ENCODE measurements at regions of chr3 and their contacts with region 1.

Region 1: GRCh38 chr3:44146073-44146472 is 95.6 kb upstream of the TOPAZ1 start:
- DNase-seq: no peak
- H3K4me3 ChIP-seq: no peak overlapping the region
- H3K27ac ChIP-seq: no peak overlapping the region
- H3K27me3 ChIP-seq: peaks cover 0 to 6% (median 0%) of the 10 kb centered on the region in 45 donors
- CTCF ChIP-seq: no peak

Region 2: DNA sequence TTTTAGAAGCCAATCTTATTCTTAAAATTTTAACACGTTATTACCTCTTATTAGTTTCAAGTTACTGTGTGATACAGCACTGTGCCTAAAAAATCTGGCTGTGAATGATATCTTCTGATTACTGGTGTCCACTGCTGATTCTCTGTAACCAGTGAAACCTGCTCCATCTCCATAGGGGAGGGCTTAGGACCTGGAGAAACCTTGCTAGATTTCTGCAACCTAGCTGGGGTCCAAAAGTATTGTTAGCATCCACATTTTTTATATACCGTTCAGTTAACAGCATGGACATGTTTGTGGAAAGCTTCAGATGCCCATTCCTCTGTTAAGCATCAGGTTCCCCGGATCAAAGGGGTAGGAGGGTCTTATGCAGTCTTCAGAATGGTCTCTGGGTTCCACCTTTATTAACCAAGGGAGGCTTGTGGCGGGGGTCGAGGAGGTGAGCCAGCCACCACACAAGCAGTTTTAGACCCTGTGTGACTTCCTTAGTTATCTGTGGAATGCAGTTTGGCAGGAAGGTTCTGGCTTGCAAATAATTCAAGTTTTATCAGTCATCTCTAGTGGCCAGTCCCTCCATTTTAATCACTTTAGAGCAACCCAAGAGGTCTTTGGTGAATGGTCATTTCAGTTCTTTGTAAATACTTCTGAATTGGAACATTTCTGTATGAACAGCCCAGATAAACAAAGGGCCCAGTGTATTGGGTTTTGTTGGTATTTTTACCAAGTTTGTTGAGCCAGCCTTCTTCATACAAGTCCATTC is 98.1 kb before region 1 on chr3:
- intact Hi-C with region 1: no loop called
- DNase-seq: no peak
- H3K4me3 ChIP-seq: no peak overlapping the region
- H3K27ac ChIP-seq: peak overlapping the region in 2 of 59 donors; percentile 7 to 19
- H3K27me3 ChIP-seq: no peaks in the 10 kb centered on the region
- CTCF ChIP-seq: no peak

Region 3: GRCh38 chr3:45280232-45280631 is 1134.2 kb after region 1 on chr3:
- intact Hi-C with region 1: loop called in 1 of 2 experiments (anchors 10 kb)
- DNase-seq: no peak
- H3K4me3 ChIP-seq: no peak overlapping the region
- H3K27ac ChIP-seq: no peak overlapping the region
- H3K27me3 ChIP-seq: peaks cover 0 to 9% (median 0%) of the 10 kb centered on the region in 45 donors
- CTCF ChIP-seq: no peak

Measured in dorsolateral prefrontal cortex (tissue), 120 donors.